K562 (cell line): ENCODE measurements at regions of chr10 and their contacts with region 1.

Region 1: DNA sequence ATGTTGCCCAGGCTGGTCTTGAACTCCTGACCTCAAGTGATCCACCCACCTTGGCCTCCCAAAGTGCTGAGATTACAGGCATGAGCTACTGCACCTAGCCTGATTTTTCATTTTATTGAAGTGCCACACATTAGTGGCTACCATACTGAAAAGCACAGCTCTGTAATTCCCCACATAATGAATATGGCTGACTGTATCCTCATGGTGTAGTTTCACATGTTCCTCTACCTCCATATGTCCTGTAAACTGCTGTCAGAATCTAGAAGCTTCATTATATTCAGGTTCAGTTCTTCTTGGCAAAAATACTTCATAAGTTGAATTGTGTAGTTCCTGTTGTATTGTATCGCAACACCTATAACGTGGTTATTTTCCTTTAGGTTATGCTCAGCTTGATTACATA is 11.1 kb downstream of the JMJD1C start:
- DNase-seq: no peak
- ATAC-seq: peak; percentile 22; the same call in 2 of the 3 replicates
- H3K4me3 ChIP-seq: no peak overlapping the region
- H3K27ac ChIP-seq: no peak overlapping the region
- H3K4me1 ChIP-seq: no peaks in the 10 kb centered on the region; a peak in 1 of 5 replicates
- H3K27me3 ChIP-seq: no peaks in the 10 kb centered on the region
- CTCF ChIP-seq: no peak
- EP300 ChIP-seq: no peak
- POLR2A ChIP-seq: no peak
- RAD21 ChIP-seq: no peak

Region 2: GRCh38 chr10:63438506-63439498 is 15.8 kb before region 1 on chr10:
- CTCF ChIA-PET with region 1: interaction called, 4 read pairs
- POLR2A ChIA-PET with region 1: interaction called, 11 read pairs
- in situ Hi-C with region 1: no loop called
- intact Hi-C with region 1: no loop called
- DNase-seq: peak in 3 of 4 experiments; percentile 16 to 55 (median 49)
- ATAC-seq: peak; percentile 47
- H3K4me3 ChIP-seq: no peak overlapping the region
- H3K27ac ChIP-seq: no peak overlapping the region
- H3K4me1 ChIP-seq: peaks cover 9 to 17% of the 10 kb centered on the region in 2 experiments; a peak in 4 of 5 replicates
- H3K27me3 ChIP-seq: no peaks in the 10 kb centered on the region
- CTCF ChIP-seq: no peak
- EP300 ChIP-seq: peak; percentile 57; the same call in 1 of the 2 replicates
- POLR2A ChIP-seq: no peak
- RAD21 ChIP-seq: no peak